ENCODE measurements at regions of chr2 and their contacts with region 1.

Region 1: DNA sequence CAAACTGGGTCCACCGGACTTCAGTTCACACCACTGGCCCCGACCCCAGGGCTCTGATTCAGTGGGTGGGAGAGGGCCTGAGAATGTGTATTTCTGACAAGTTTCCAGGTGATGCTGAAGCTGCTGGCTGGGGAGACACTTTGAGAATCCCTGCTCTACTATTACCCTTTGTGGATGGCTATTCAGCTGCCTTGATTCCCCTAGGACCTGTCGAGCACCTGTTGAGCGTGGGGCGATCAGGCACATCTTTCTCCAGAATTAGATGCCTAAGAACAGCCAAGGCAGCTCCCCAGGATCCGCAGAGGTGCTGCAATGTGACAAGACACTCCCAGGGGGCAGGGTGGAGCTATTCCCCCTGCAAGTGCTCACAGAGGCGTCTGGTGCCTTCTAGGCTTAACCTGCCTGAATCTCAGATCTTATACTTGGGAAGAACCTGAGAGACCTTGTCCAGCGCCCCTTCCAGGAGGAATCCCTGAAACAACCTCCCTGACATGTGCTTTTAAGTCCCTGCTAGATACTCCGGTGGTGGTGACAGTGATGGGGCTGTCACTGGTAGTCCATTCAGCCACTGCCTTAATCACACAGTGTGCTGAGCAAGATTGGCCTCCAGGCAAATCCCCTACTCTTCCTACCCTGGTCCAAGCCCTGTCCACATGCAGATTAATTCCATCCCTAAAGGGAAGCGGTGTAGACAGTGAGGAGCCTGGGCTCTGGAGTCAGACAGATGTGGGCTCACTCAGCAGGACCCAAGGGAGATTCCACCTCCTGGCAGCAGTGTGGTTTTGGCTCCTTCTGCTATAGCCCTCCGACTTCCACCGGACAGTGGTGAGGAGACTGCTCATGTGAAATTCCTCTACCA is 43.4 kb upstream of the OTOF start:
- DNase-seq: no peak
- ATAC-seq: no peak
- H3K4me3 ChIP-seq: no peak overlapping the region
- H3K27ac ChIP-seq: no peak overlapping the region
- H3K4me1 ChIP-seq: no peaks in the 10 kb centered on the region
- H3K27me3 ChIP-seq: no peaks in the 10 kb centered on the region

Region 2: GRCh38 chr2:26471766-26472706 is 49.2 kb before region 1 on chr2:
- intact Hi-C with region 1: loop called in 1 of 4 experiments (anchors 5 kb)
- DNase-seq: peak in 1 of 3 donors; percentile 25
- ATAC-seq: no peak
- H3K4me3 ChIP-seq: no peak overlapping the region
- H3K27ac ChIP-seq: no peak overlapping the region
- H3K4me1 ChIP-seq: no peaks in the 10 kb centered on the region
- H3K27me3 ChIP-seq: no peaks in the 10 kb centered on the region

Region 3: GRCh38 chr2:26735096-26735495 is 213.8 kb after region 1 on chr2:
- intact Hi-C with region 1: no loop called
- DNase-seq: peak in 1 of 3 donors; percentile 68
- ATAC-seq: peak; percentile 61 to 82
- H3K4me3 ChIP-seq: no peak overlapping the region
- H3K27ac ChIP-seq: peak overlapping the region; percentile 0
- H3K4me1 ChIP-seq: peaks cover 4% of the 10 kb centered on the region
- H3K27me3 ChIP-seq: no peaks in the 10 kb centered on the region